ENCODE measurements at regions of chr17 and their contacts with region 1.

Region 1: GRCh38 chr17:61635913-61636432 is 45.0 kb upstream of the NACA2 start:
- DNase-seq: peak; percentile 72
- ATAC-seq: no peak
- H3K4me3 Mint-ChIP-seq: no peak overlapping the region
- H3K27ac Mint-ChIP-seq: no peak overlapping the region
- H3K4me1 Mint-ChIP-seq: no peaks in the 10 kb centered on the region
- H3K27me3 Mint-ChIP-seq: peaks cover 43% of the 10 kb centered on the region

Region 2: DNA sequence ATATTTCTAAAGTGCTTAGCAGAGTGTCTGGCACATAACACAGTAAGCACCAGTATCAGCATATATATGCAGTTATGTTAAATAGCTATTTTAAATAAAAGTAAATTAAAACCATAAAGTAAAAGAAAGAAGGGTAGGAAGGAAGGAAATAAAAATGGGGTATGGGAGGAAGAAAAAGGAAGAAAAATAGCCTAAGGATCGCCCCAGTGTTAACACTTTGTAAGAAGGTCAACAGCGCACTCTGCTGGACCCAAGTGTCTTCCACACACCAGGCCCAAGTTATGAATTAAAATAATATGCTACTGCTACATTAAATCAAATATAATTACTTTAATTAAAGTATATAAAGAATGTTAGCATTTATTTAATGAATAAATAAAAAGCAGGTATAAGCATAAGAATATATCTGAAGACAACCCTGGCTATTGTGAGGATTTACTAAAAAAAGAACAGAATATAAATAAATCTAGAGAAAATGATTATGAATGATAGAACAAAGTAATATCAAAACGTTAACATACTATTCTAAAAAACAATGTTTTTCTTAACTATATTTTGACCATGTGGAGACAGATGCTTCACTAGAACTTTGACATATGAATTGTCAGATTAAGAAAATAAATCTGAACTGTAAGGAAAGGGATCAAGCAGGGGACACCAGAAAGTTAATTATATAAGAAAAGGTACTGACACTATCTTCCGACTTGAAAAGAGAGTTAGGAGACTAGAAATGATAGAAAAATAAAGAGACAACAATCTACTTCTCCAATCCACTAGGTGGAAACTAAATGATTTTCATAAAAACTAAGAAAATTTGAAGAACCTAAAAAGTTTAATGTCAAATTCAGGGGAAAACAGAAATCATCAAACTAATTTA is 201.4 kb after region 1 on chr17:
- CTCF ChIA-PET with region 1: interaction called, 10 read pairs
- POLR2A ChIA-PET with region 1: no interaction called
- intact Hi-C with region 1: loop called (anchors 1 kb)
- DNase-seq: peak; percentile 72
- ATAC-seq: no peak
- H3K4me3 Mint-ChIP-seq: no peak overlapping the region
- H3K27ac Mint-ChIP-seq: no peak overlapping the region
- H3K4me1 Mint-ChIP-seq: no peaks in the 10 kb centered on the region
- H3K27me3 Mint-ChIP-seq: no peaks in the 10 kb centered on the region

Measured in activated CD4-positive, alpha-beta T cell treated with anti-CD3 and anti-CD28 coated beads for 36 hours (primary cell).